B cell (primary cell): ENCODE measurements at regions of chr18 and their contacts with region 1.

Region 1: DNA sequence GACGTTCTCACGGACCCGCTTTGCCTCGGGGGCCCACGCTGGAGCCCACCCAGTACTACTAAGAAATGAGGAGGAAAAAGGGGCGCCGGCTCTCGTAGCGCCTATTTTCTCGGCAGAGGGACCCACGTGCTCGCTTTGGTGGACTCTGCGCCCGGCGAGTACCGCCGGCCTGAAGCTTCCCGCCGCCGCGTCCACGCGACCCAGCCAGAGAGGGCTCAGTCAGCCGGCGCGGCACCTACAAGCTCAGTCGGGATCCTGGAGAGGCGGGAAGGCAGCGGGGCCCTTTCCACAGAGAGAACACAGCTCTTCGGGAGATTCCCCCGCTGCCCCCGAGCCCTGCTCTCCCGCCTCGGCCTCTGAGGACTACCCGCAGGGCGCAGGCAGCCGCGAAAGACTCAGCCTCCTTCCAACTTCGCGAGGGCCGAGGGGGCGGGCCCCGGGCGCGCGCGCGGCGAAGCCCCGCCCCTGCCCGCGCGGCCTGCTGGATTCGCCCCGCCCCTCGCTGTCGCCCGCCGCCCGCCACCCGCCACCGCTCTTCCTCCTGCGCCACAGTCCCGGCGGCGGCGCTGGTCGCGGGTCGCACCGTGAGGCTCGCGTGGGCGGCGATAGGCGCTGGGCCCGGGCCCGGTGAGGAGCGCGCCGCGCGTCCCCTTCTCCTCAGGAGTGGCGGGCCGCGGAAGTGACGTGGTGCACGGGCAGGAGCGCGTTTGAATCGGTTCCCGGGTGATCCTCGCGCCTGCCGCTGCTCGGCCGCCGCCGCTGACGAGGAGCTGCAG is at the start of gene SMCHD1:
- DNase-seq: peak; percentile 96
- ATAC-seq: peak; percentile 78
- H3K4me3 ChIP-seq: peak within 1 kb of the TSS; percentile 86 to 99 (median 96)
- H3K4me3 Mint-ChIP-seq: peak within 1 kb of the TSS; percentile 98
- H3K27ac ChIP-seq: peak within 1 kb of the TSS; percentile 97 to 100
- H3K27ac Mint-ChIP-seq: peak within 1 kb of the TSS; percentile 98
- H3K4me1 ChIP-seq: peaks cover 32 to 33% of the 10 kb centered on the region in 2 donors
- H3K4me1 Mint-ChIP-seq: peaks cover 37% of the 10 kb centered on the region
- H3K27me3 ChIP-seq: no peaks in the 10 kb centered on the region
- H3K27me3 Mint-ChIP-seq: no peaks in the 10 kb centered on the region
- CTCF ChIP-seq: no peak
- total RNA-seq, gene SMCHD1: 380 and 443 TPM in 2 replicates

Region 2: GRCh38 chr18:2571200-2572143 is 83.9 kb before region 1 on chr18 and contains the starts of genes METTL4 and NDC80:
- CTCF ChIA-PET with region 1: interaction called, 40 read pairs
- POLR2A ChIA-PET with region 1: interaction called, 41 read pairs
- intact Hi-C with region 1: loop called (anchors 1 kb)
- DNase-seq: peak; percentile 95
- ATAC-seq: peak; percentile 93
- H3K4me3 ChIP-seq: peak within 1 kb of the TSS; percentile 70 to 99 (median 81)
- H3K4me3 Mint-ChIP-seq: peak within 1 kb of the TSS; percentile 99
- H3K27ac ChIP-seq: peak within 1 kb of the TSS; percentile 97 to 98
- H3K27ac Mint-ChIP-seq: peak within 1 kb of the TSS; percentile 99
- H3K4me1 ChIP-seq: peaks cover 22 to 23% of the 10 kb centered on the region in 2 donors
- H3K4me1 Mint-ChIP-seq: peaks cover 45% of the 10 kb centered on the region
- H3K27me3 ChIP-seq: no peaks in the 10 kb centered on the region
- H3K27me3 Mint-ChIP-seq: no peaks in the 10 kb centered on the region
- CTCF ChIP-seq: no peak
- total RNA-seq, gene METTL4: 23.9 and 31.6 TPM in 2 replicates
- total RNA-seq, gene NDC80: 3.7 and 3.9 TPM in 2 replicates

Region 3: GRCh38 chr18:2636126-2636631 is 19.2 kb before region 1 on chr18:
- CTCF ChIA-PET with region 1: interaction called, 88 read pairs
- POLR2A ChIA-PET with region 1: interaction called, 166 read pairs
- intact Hi-C with region 1: loop called (anchors 1 kb)
- DNase-seq: no peak
- ATAC-seq: peak; percentile 11
- H3K4me3 ChIP-seq: peak overlapping the region; percentile 21 to 71 (median 29)
- H3K4me3 Mint-ChIP-seq: peak overlapping the region; percentile 85
- H3K27ac ChIP-seq: peak overlapping the region; percentile 96 to 99
- H3K27ac Mint-ChIP-seq: peak overlapping the region; percentile 99
- H3K4me1 ChIP-seq: peaks cover 67 to 79% of the 10 kb centered on the region in 2 donors
- H3K4me1 Mint-ChIP-seq: peaks cover 84% of the 10 kb centered on the region
- H3K27me3 ChIP-seq: no peaks in the 10 kb centered on the region
- H3K27me3 Mint-ChIP-seq: no peaks in the 10 kb centered on the region
- CTCF ChIP-seq: no peak

Region 4: DNA sequence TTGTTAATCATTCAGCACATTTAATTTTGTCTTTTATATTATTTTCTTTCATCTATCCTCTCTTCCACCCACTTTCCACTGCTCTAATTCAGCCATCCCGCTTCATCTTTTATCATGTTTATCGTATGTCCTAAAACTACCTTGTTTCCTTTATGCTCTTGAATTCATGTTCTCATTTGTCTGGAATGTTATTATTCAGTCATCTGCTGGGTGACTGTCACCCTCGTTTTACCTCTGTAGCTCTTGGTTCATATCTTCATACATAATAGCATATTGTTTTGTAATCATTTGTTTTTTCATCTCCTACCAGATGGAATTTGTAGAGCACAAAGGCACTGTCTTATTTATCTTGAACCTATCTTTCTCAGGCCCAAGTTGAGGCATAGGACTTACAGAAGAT is 37.1 kb after region 1 on chr18:
- CTCF ChIA-PET with region 1: interaction called, 3 read pairs
- POLR2A ChIA-PET with region 1: interaction called, 6 read pairs
- intact Hi-C with region 1: loop called (anchors 5 kb)
- DNase-seq: no peak
- ATAC-seq: no peak
- H3K4me3 ChIP-seq: no peak overlapping the region
- H3K4me3 Mint-ChIP-seq: no peak overlapping the region
- H3K27ac ChIP-seq: no peak overlapping the region
- H3K27ac Mint-ChIP-seq: peak overlapping the region; percentile 0
- H3K4me1 ChIP-seq: peaks cover 13 to 14% of the 10 kb centered on the region in 2 donors
- H3K4me1 Mint-ChIP-seq: peaks cover 19% of the 10 kb centered on the region
- H3K27me3 ChIP-seq: no peaks in the 10 kb centered on the region
- H3K27me3 Mint-ChIP-seq: no peaks in the 10 kb centered on the region
- CTCF ChIP-seq: no peak

Region 5: GRCh38 chr18:2805970-2806943 is 150.9 kb after region 1 on chr18:
- CTCF ChIA-PET with region 1: no interaction called
- POLR2A ChIA-PET with region 1: no interaction called
- intact Hi-C with region 1: no loop called
- DNase-seq: no peak
- ATAC-seq: no peak
- H3K4me3 ChIP-seq: no peak overlapping the region
- H3K4me3 Mint-ChIP-seq: no peak overlapping the region
- H3K27ac ChIP-seq: no peak overlapping the region
- H3K27ac Mint-ChIP-seq: no peak overlapping the region
- H3K4me1 ChIP-seq: no peaks in the 10 kb centered on the region
- H3K4me1 Mint-ChIP-seq: no peaks in the 10 kb centered on the region
- H3K27me3 ChIP-seq: no peaks in the 10 kb centered on the region
- H3K27me3 Mint-ChIP-seq: no peaks in the 10 kb centered on the region
- CTCF ChIP-seq: no peak

Region 6: DNA sequence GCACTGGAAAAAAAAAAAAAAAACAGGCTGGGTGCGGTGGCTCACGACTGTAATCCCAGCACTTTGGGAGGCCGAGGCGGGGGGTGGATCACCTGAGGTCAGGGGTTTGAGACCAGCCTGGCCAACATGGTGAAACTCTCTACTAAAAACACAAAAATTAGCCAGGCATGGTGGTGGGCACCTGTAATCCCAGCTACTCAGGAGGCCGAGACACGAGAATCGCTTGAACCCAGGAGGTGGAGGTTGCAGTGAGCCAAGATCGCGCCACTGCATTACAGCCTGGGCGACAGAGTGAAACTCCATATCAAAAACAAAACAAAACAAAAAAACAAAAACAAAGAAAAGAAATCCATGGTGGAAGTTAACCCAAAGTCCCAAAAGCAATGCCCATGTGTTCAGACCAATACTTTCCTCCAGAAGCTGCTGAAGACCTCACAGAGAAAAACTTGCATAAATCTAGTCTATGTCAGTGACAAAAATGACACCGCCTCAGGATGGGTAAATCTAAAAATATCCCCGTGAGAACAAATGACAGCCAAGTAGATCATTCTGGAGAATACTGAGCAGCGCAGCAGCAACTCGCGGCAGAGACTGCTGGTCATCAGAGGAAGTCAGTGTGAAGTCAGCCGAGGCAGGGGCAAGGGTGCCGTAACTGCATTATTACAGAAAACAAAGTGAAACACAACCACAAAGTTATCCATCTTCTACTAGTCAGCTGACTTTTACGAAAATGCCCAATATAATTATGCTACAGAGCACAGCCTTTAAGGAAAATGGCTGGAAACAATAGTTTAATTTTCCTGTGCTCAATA is 316.6 kb after region 1 on chr18:
- CTCF ChIA-PET with region 1: no interaction called
- POLR2A ChIA-PET with region 1: no interaction called
- intact Hi-C with region 1: loop called (anchors 5 kb)
- DNase-seq: peak; percentile 86
- ATAC-seq: peak; percentile 81
- H3K4me3 ChIP-seq: peak overlapping the region; percentile 18 to 58 (median 47)
- H3K4me3 Mint-ChIP-seq: peak overlapping the region; percentile 88
- H3K27ac ChIP-seq: peak overlapping the region; percentile 89 to 91
- H3K27ac Mint-ChIP-seq: peak overlapping the region; percentile 96
- H3K4me1 ChIP-seq: peaks cover 64 to 66% of the 10 kb centered on the region in 2 donors
- H3K4me1 Mint-ChIP-seq: peaks cover 70% of the 10 kb centered on the region
- H3K27me3 ChIP-seq: no peaks in the 10 kb centered on the region
- H3K27me3 Mint-ChIP-seq: no peaks in the 10 kb centered on the region
- CTCF ChIP-seq: no peak